H1 (cell line): ENCODE measurements at regions of chr10 and their contacts with region 1.

Region 1: GRCh38 chr10:69337296-69338132 is 59.2 kb downstream of the HK1 start:
- DNase-seq: no peak
- H3K4me3 ChIP-seq: no peak overlapping the region; a peak in 1 of 8 replicates
- H3K27ac ChIP-seq: peak overlapping the region; percentile 60
- H3K4me1 ChIP-seq: peaks cover 14 to 41% (median 36%) of the 10 kb centered on the region in 4 experiments
- H3K27me3 ChIP-seq: no peaks in the 10 kb centered on the region
- CTCF ChIP-seq: no peak
- EP300 ChIP-seq: no peak
- POLR2A ChIP-seq: no peak
- RAD21 ChIP-seq: no peak

Region 2: DNA sequence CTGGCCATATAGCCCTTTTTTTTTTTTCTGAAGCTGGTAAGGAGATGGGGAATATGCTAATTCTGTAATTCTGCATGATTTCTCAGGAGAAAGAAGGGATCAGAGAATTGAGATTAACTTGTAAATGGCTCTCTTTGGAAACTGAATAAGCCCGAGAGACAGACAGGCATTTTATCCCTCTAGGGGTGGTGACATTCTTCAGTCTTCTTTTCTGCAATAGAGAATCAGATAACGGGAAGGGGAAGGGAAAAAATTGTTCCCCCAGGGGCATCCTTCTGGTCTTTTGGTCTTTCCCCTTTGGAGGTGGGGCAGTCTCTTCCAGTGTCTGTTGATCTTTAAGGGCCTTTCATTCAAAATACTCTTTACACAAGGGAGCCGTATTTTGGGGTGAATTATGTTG is 25.0 kb before region 1 on chr10:
- CTCF ChIA-PET with region 1: interaction called, 13 read pairs
- POLR2A ChIA-PET with region 1: interaction called, 7 read pairs
- DNase-seq: no peak
- H3K4me3 ChIP-seq: no peak overlapping the region
- H3K27ac ChIP-seq: no peak overlapping the region
- H3K4me1 ChIP-seq: peaks cover 8 to 14% (median 11%) of the 10 kb centered on the region in 4 experiments
- H3K27me3 ChIP-seq: no peaks in the 10 kb centered on the region
- CTCF ChIP-seq: no peak
- EP300 ChIP-seq: no peak
- POLR2A ChIP-seq: no peak
- RAD21 ChIP-seq: no peak

Region 3: DNA sequence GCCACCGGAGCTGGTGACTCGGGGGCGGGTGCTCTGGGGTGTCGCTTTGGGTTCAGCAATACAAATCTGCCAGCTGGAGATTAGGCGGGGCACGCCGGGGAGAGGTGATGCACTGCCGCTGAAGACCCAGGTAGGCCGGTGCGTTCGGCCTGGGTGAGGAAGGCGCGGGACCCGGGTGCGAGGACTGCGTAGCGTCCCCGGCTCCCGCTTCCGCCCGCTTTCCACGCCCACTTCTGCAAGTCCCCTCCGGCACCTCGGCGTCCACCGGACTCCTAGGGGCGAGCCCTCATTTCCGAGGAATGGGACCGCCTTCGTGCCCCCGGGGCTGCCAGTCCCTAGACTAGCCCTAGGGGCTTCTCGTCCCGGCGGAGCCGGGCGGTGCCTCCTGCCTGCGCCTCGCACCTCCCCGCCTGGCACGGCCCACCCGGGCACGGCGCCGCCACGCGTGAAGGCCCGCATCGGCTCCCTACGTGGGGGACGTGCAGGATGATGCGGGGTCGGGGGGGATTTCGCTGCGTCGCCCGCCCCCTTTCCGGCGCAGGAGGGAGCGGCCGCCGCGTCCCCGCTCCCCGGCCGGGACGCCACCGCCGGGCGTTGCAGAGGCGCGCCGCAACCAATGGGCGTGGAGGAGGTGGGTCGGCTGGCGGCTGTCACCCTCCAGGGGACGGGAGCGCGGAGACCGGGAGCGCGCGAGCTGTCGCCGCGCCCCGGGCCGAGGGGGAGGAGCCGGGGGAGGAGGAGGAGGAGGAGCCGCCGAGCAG is 19.2 kb before region 1 on chr10:
- CTCF ChIA-PET with region 1: interaction called, 23 read pairs
- POLR2A ChIA-PET with region 1: interaction called, 7 read pairs
- DNase-seq: peak; percentile 29 to 88
- H3K4me3 ChIP-seq: peak overlapping the region; percentile 78 to 98 (median 91)
- H3K27ac ChIP-seq: peak overlapping the region; percentile 29; the same call in 1 of the 2 replicates
- H3K4me1 ChIP-seq: peaks cover 16 to 38% (median 19%) of the 10 kb centered on the region in 4 experiments
- H3K27me3 ChIP-seq: no peaks in the 10 kb centered on the region
- CTCF ChIP-seq: no peak
- EP300 ChIP-seq: no peak
- POLR2A ChIP-seq: 0 out of 3 replicates have a peak, but pooled peaks of 1 of the 2 experiments have one; percentile 18
- RAD21 ChIP-seq: no peak; a peak in 1 of 4 replicates

Region 4: DNA sequence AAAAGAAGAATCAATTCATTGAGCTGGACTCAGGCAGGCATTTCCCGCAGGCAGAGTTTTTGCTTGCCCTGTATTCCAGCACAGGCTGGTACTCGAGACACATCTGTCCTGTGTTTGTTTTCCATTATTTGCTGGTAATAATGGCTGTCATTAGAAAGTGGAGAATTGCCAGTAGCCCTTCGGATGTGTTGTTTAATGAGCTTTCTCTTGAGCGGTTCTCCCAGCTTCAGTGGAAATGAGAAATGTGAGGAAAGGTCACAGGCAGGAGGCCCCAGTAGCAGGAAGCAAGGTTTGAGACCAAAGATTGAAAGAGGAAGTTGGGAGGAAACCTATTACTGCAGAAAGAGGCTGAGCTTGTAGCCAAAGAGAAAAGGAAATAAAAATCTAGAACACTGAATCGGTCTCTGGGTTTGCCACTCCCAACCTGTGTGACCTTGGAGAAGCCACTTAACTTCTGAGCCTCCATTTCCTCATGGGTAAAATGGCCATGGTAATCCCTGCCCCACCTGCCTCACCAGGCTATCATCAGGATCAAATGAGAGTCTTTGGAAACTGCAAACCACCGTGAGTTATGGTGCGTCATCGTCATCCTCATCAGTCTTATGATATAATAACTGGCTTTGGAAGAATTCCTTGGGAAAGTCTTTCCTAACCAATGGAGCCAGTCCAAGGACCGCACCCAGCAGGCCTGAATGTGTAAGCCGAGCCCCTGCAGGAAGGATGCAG is 11.5 kb after region 1 on chr10:
- CTCF ChIA-PET with region 1: interaction called, 16 read pairs
- POLR2A ChIA-PET with region 1: interaction called, 7 read pairs
- DNase-seq: no peak
- H3K4me3 ChIP-seq: no peak overlapping the region
- H3K27ac ChIP-seq: no peak overlapping the region
- H3K4me1 ChIP-seq: peaks cover 12 to 24% (median 19%) of the 10 kb centered on the region in 4 experiments
- H3K27me3 ChIP-seq: no peaks in the 10 kb centered on the region
- CTCF ChIP-seq: no peak
- EP300 ChIP-seq: no peak
- POLR2A ChIP-seq: no peak
- RAD21 ChIP-seq: no peak

Region 5: GRCh38 chr10:69360485-69361324 is 23.2 kb after region 1 on chr10:
- CTCF ChIA-PET with region 1: interaction called, 11 read pairs
- POLR2A ChIA-PET with region 1: interaction called, 4 read pairs
- DNase-seq: no peak
- H3K4me3 ChIP-seq: no peak overlapping the region
- H3K27ac ChIP-seq: no peak overlapping the region
- H3K4me1 ChIP-seq: peaks cover 2 to 12% (median 6%) of the 10 kb centered on the region in 4 experiments; a peak in 5 of 7 replicates
- H3K27me3 ChIP-seq: no peaks in the 10 kb centered on the region
- CTCF ChIP-seq: no peak
- EP300 ChIP-seq: no peak
- POLR2A ChIP-seq: no peak
- RAD21 ChIP-seq: no peak

Region 6: GRCh38 chr10:69425511-69426298 is 88.2 kb after region 1 on chr10:
- CTCF ChIA-PET with region 1: no interaction called
- POLR2A ChIA-PET with region 1: no interaction called
- DNase-seq: no peak
- H3K4me3 ChIP-seq: no peak overlapping the region
- H3K27ac ChIP-seq: no peak overlapping the region
- H3K4me1 ChIP-seq: no peaks in the 10 kb centered on the region
- H3K27me3 ChIP-seq: no peaks in the 10 kb centered on the region
- CTCF ChIP-seq: no peak
- EP300 ChIP-seq: no peak
- POLR2A ChIP-seq: no peak
- RAD21 ChIP-seq: no peak